A549 (cell line): ENCODE measurements at regions of chr9 and their contacts with region 1.

Region 1: DNA sequence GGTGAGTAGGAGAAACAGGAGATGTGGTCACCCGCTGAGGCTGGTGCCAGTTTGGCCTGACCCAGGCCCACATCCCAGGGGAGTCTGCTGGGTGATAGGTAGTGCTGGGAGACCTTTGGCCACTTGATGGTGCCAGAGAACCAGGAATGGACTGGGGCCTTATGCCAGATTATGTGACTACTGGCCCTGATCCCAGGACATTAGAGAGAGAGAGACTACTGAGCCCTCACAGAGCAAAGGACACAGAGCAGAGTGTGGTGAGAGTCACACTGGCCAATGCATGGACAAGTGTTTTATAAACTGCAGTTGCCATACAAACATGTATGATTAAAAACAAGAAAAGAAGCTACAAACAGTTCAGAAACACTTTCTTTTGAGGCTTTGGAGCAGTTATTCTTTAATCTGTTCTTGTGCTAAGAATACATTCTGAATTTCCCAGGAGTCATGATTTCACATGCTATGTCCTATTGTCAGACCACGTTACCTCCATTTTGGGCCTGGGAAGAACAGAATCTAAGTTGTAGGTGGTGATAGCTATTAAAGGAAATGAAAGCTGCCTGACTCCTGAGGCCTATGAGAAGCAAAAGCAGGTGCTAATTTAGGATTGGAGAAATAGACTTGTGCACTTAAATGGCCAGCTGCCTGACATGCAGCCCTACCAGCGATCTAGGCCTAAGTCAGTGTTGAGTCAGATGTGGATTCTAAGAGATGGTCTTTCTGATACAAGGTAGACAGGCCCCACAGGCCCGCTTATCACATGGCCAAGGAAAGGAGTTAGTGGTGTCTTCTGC is 32.6 kb upstream of the TMOD1 start:
- DNase-seq: peak; percentile 46 to 70
- ATAC-seq: peak; percentile 89 to 99
- H3K4me3 ChIP-seq: no peak overlapping the region
- H3K27ac ChIP-seq: no peak overlapping the region
- H3K4me1 ChIP-seq: no peaks in the 10 kb centered on the region
- CTCF ChIP-seq: peak; percentile 80
- EP300 ChIP-seq: no peak
- POLR2A ChIP-seq: no peak
- RAD21 ChIP-seq: peak; percentile 88 to 94

Region 2: GRCh38 chr9:97445119-97445701 is 23.6 kb before region 1 on chr9:
- CTCF ChIA-PET with region 1: interaction called, 29 read pairs
- POLR2A ChIA-PET with region 1: no interaction called
- DNase-seq: no peak
- ATAC-seq: no peak
- H3K4me3 ChIP-seq: no peak overlapping the region
- H3K27ac ChIP-seq: no peak overlapping the region
- H3K4me1 ChIP-seq: 0 out of 3 replicates have a peak, but pooled peaks cover 3% of the 10 kb centered on the region
- CTCF ChIP-seq: no peak
- EP300 ChIP-seq: no peak
- POLR2A ChIP-seq: no peak
- RAD21 ChIP-seq: no peak

Region 3: DNA sequence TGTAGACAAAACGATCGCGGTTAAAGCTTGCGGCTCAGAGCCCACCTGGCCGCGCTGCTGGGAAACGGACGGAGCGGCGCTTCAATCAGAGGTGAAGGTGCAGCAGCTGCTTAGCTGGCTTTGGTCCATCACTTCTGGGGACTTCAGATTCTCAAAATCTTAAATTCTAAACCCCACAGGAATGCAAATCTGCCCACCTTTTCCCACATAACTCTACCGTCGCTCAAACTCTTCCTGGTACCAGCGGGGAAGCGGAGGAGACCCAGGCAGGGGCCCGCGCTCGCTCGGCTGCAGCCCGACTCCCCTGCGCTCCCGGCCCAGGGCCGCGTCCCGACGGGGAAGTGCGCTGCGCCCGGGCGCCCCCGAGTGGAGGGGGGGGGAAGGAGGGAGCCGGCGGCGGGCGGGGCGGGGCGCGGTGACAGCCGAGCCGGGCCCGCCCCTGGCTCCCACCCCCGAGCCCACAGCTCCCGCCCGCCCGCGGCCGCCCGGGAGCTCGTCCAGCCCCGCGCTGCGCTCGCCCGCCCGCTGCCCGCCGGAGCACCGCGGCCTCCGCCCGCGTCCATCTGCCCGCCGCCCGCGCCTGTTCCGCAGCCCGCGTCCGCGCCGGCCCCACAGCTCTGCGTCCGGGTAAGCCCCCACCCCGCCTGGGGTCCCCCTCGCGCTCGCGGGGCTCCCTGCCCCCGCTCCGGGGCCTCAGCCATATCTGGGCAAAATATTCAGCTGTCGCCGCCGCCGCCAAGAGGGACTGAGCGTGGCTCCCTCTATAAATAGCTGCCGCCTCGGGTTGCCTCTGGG is 32.5 kb after region 1 on chr9 and contains the start of gene TMOD1:
- CTCF ChIA-PET with region 1: interaction called, 23 read pairs
- POLR2A ChIA-PET with region 1: no interaction called
- DNase-seq: peak; percentile 45 to 83
- ATAC-seq: peak; percentile 86 to 90
- H3K4me3 ChIP-seq: peak within 1 kb of the TSS; percentile 85
- H3K27ac ChIP-seq: peak within 1 kb of the TSS; percentile 62 to 86
- H3K4me1 ChIP-seq: peaks cover 5% of the 10 kb centered on the region; the same call in 2 of the 3 replicates
- CTCF ChIP-seq: peak; percentile 58
- EP300 ChIP-seq: no peak
- POLR2A ChIP-seq: no peak
- RAD21 ChIP-seq: peak; percentile 8 to 34; a peak in 2 of 5 replicates
- polyA plus RNA-seq, gene TMOD1: 0.28 and 0.48 TPM in 2 replicates

Region 4: GRCh38 chr9:97521576-97522333 is 52.9 kb after region 1 on chr9:
- CTCF ChIA-PET with region 1: interaction called, 12 read pairs
- POLR2A ChIA-PET with region 1: no interaction called
- DNase-seq: no peak
- ATAC-seq: no peak
- H3K4me3 ChIP-seq: no peak overlapping the region
- H3K27ac ChIP-seq: no peak overlapping the region
- H3K4me1 ChIP-seq: peaks cover 14% of the 10 kb centered on the region
- CTCF ChIP-seq: no peak
- EP300 ChIP-seq: no peak
- POLR2A ChIP-seq: no peak
- RAD21 ChIP-seq: no peak

Region 5: GRCh38 chr9:97575673-97576200 is 106.9 kb after region 1 on chr9:
- CTCF ChIA-PET with region 1: interaction called, 12 read pairs
- POLR2A ChIA-PET with region 1: no interaction called
- DNase-seq: no peak
- ATAC-seq: no peak
- H3K4me3 ChIP-seq: no peak overlapping the region
- H3K27ac ChIP-seq: no peak overlapping the region
- H3K4me1 ChIP-seq: no peaks in the 10 kb centered on the region
- CTCF ChIP-seq: no peak
- EP300 ChIP-seq: no peak
- POLR2A ChIP-seq: no peak
- RAD21 ChIP-seq: no peak

Region 6: DNA sequence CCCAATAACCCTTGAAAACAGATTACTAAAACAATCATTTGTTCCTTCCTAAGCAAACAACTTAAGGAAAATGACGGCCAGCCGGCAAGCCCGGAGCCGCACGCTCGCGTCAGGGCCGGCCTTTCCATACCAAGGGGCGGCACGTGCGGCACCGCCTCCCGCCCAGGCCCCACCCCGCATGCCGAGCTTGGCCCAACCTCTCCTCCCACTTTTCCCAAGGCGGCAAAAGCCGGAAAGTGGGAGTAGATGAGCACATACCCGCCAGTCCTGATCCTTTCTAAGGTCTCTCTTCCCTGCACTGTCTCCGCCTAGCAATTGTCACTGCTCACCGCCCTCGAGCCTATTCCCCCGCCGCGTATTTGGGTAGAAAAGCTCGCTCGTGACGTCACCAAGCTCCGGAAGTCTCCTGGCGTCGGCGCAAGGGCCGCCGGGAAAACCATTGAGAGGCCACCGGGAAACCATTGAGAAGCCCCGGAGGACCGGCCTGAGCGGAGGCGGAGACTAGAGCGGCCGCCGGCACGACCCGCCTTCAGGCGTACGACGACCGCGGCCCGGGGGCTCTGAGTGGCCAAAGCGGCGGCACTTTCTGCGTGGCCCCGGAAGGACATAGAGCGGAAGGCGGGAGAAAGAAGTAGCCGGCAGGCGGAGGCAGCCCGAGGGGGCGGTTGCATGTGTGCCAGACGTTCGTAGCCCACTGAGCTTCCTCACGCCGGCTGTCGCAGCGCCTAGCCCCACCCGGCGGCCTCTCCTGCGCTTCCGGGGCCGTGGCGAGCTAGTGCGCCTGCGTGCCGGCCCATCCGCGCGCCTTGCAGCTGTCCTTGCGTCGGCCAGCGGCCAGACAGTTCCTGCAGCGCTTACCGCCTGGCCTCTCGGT is 164.4 kb after region 1 on chr9 and contains the starts of genes NCBP1 and TSTD2:
- CTCF ChIA-PET with region 1: interaction called, 16 read pairs
- POLR2A ChIA-PET with region 1: interaction called, 6 read pairs
- DNase-seq: peak; percentile 91 to 98
- ATAC-seq: peak; percentile 91 to 97
- H3K4me3 ChIP-seq: peak within 1 kb of the TSS; percentile 96
- H3K27ac ChIP-seq: peak within 1 kb of the TSS; percentile 93 to 96
- H3K4me1 ChIP-seq: peaks cover 38% of the 10 kb centered on the region
- CTCF ChIP-seq: no peak
- EP300 ChIP-seq: no peak
- POLR2A ChIP-seq: peak; percentile 96
- RAD21 ChIP-seq: no peak
- polyA plus RNA-seq, gene NCBP1: 43.4 and 48.2 TPM in 2 replicates
- polyA plus RNA-seq, gene TSTD2: 33.3 and 37.4 TPM in 2 replicates